ENCODE measurements at regions of chr18 and their contacts with region 1.

Region 1: GRCh38 chr18:28108814-28109213 is 68.1 kb downstream of the CDH2 start:
- DNase-seq: no peak
- ATAC-seq: peak in 2 of 4 donors; percentile 20 to 30
- H3K4me3 ChIP-seq: no peak overlapping the region
- H3K27ac ChIP-seq: peak overlapping the region in 10 of 12 donors; percentile 53 to 97 (median 86)
- H3K4me1 ChIP-seq: peaks cover 0 to 44% (median 13%) of the 10 kb centered on the region in 12 donors
- H3K27me3 ChIP-seq: no peaks in the 10 kb centered on the region
- CTCF ChIP-seq: peak in 4 of 12 donors; percentile 6 to 24 (median 20)
- POLR2A ChIP-seq: no peak

Region 2: GRCh38 chr18:27785815-27786471 is 322.9 kb before region 1 on chr18:
- intact Hi-C with region 1: loop called in 1 of 10 experiments (anchors 10 kb)
- DNase-seq: no peak
- ATAC-seq: no peak
- H3K4me3 ChIP-seq: no peak overlapping the region
- H3K27ac ChIP-seq: no peak overlapping the region
- H3K4me1 ChIP-seq: no peaks in the 10 kb centered on the region
- H3K27me3 ChIP-seq: no peaks in the 10 kb centered on the region
- CTCF ChIP-seq: no peak
- POLR2A ChIP-seq: no peak

Region 3: GRCh38 chr18:27899893-27900292 is 208.9 kb before region 1 on chr18:
- intact Hi-C with region 1: no loop called
- DNase-seq: no peak
- ATAC-seq: no peak
- H3K4me3 ChIP-seq: no peak overlapping the region
- H3K27ac ChIP-seq: no peak overlapping the region
- H3K4me1 ChIP-seq: no peaks in the 10 kb centered on the region
- H3K27me3 ChIP-seq: no peaks in the 10 kb centered on the region
- CTCF ChIP-seq: no peak
- POLR2A ChIP-seq: no peak

Region 4: DNA sequence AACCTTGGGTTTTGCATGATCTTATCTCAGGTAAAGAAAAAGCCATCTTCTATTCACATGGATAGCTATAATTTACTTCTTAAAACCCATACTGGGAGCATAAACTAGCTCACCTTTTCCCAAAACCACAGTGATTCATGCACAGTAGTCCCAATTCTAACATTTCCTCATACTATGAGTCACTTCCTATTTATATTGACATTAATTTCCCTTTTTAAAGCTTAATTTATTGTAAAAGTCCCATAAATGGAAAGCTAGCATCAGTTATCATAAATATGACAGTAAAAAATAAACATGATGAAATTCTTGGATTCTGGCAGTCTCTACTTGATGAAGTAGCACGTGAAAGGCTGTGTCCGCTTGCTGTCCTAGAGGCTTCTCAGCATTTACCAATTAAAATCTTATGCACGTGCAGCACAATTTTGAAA is 112.0 kb before region 1 on chr18:
- intact Hi-C with region 1: loop called in 1 of 10 experiments (anchors 10 kb)
- DNase-seq: no peak
- ATAC-seq: no peak
- H3K4me3 ChIP-seq: no peak overlapping the region
- H3K27ac ChIP-seq: peak overlapping the region in 4 of 12 donors; percentile 11 to 64 (median 34)
- H3K4me1 ChIP-seq: peaks cover 0 to 30% (median 10%) of the 10 kb centered on the region in 12 donors
- H3K27me3 ChIP-seq: no peaks in the 10 kb centered on the region
- CTCF ChIP-seq: no peak
- POLR2A ChIP-seq: no peak

Region 5: GRCh38 chr18:28041366-28041765 is 67.4 kb before region 1 on chr18:
- intact Hi-C with region 1: no loop called
- DNase-seq: no peak
- ATAC-seq: peak in 2 of 4 donors; percentile 7 to 21
- H3K4me3 ChIP-seq: no peak overlapping the region
- H3K27ac ChIP-seq: peak overlapping the region in 1 of 12 donors; percentile 21
- H3K4me1 ChIP-seq: peaks cover 0 to 51% (median 11%) of the 10 kb centered on the region in 12 donors
- H3K27me3 ChIP-seq: no peaks in the 10 kb centered on the region
- CTCF ChIP-seq: no peak
- POLR2A ChIP-seq: no peak

Measured in heart left ventricle (tissue), 16 donors.